HepG2 (cell line): ENCODE measurements at regions of chr15 and their contacts with region 1.

Region 1: DNA sequence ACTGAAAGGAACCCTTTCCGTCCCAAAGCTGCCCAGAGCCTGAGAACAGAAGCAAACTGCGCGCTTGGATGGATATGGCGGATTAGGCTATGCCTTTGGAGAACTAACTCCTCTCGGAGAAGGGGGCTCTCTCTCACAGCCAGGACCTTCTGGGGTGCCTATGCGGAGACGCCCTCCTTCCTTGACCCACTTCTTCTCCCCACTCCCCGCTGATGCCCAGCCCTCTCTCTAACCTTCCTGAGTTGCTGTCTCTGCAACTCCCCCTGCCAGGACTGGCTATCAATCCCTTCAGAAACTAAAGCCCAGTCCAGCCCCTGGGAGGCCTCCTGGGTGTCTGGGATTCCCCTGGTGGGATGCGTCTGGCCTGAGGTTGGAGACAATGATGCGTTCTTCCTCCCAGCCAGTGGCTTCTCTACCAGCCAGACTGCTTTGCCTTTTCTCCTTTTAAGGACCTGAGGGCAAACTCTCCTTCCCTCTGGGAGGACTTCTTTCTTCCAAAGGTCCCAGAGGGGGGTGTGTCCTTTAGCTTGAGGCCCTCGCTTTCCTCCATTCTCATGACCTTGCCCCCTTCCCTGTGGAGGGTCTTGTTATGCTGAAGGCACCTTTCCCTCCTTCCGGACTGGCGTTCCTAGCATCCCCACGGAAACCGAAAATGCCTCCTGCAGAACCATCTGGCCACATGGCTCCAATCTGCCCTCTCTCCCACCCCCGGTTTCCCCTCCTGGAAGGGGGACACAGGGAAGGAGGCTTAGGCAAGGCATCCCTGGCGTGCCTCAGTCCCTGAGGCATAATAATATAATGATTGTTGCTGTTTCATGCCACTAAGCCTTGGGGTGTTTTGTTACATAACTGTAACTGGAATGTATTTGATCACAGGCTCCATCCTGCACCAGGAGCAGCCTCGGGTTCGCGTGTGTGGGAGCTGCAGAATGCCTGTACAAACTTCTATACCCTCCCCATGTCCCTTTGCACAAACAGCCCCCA is 63.4 kb upstream of the C15orf39 start:
- DNase-seq: no peak
- ATAC-seq: no peak
- H3K4me3 ChIP-seq: no peak overlapping the region
- H3K27ac ChIP-seq: peak overlapping the region; percentile 96
- H3K4me1 ChIP-seq: peaks cover 71% of the 10 kb centered on the region
- H3K27me3 ChIP-seq: no peaks in the 10 kb centered on the region
- CTCF ChIP-seq: no peak
- EP300 ChIP-seq: no peak
- POLR2A ChIP-seq: no peak
- RAD21 ChIP-seq: no peak

Region 2: GRCh38 chr15:75178171-75179075 is 40.1 kb after region 1 on chr15:
- CTCF ChIA-PET with region 1: no interaction called
- POLR2A ChIA-PET with region 1: interaction called, 17 read pairs
- in situ Hi-C with region 1: no loop called
- intact Hi-C with region 1: no loop called
- DNase-seq: peak; percentile 75
- ATAC-seq: peak; percentile 72
- H3K4me3 ChIP-seq: peak overlapping the region; percentile 46 to 68 (median 55)
- H3K27ac ChIP-seq: peak overlapping the region; percentile 56
- H3K4me1 ChIP-seq: peaks cover 94% of the 10 kb centered on the region
- H3K27me3 ChIP-seq: no peaks in the 10 kb centered on the region
- CTCF ChIP-seq: peak; percentile 18
- EP300 ChIP-seq: peak in 1 of 2 experiments; percentile 61; a peak in 1 of 4 replicates
- POLR2A ChIP-seq: peak in 1 of 2 experiments; percentile 47; a peak in 2 of 4 replicates
- RAD21 ChIP-seq: peak; percentile 18; the same call in 1 of the 2 replicates

Region 3: DNA sequence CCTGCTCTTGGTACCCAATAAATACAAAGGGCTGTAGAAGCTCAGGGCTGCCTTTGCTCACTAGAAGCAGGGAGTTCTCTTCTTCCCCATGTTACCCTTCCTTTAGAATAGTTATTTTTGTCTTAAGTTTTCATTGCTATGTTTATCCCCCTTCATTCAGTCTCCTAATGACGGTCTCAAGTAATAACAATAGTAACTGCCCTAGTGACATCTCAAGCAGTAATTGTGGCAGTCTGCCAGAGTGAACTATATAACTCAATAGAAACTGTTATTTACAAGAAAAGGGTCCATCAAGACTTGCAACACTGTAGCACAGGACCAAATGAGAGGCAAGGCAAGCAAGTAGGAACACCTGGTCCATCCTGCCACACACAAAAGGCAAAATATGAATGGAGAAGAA is 345.7 kb after region 1 on chr15:
- CTCF ChIA-PET with region 1: no interaction called
- POLR2A ChIA-PET with region 1: no interaction called
- in situ Hi-C with region 1: no loop called
- intact Hi-C with region 1: no loop called
- DNase-seq: no peak
- ATAC-seq: no peak
- H3K4me3 ChIP-seq: no peak overlapping the region
- H3K27ac ChIP-seq: no peak overlapping the region
- H3K4me1 ChIP-seq: no peaks in the 10 kb centered on the region
- H3K27me3 ChIP-seq: no peaks in the 10 kb centered on the region
- CTCF ChIP-seq: no peak
- EP300 ChIP-seq: no peak
- POLR2A ChIP-seq: no peak
- RAD21 ChIP-seq: no peak